CD4-positive, alpha-beta T cell (primary cell): ENCODE measurements at regions of chr19 and their contacts with region 1.

Region 1: GRCh38 chr19:2096480-2097329 is at the start of gene IZUMO4:
- DNase-seq: peak; percentile 99 to 100 (median 100)
- ATAC-seq: peak; percentile 79
- H3K4me3 ChIP-seq: peak within 1 kb of the TSS; percentile 93
- H3K4me3 Mint-ChIP-seq: peak within 1 kb of the TSS; percentile 97
- H3K27ac ChIP-seq: peak within 1 kb of the TSS; percentile 75 to 79
- H3K27ac Mint-ChIP-seq: peak within 1 kb of the TSS; percentile 96
- H3K4me1 ChIP-seq: peaks cover 54% of the 10 kb centered on the region
- H3K4me1 Mint-ChIP-seq: peaks cover 25% of the 10 kb centered on the region
- H3K27me3 ChIP-seq: no peaks in the 10 kb centered on the region
- H3K27me3 Mint-ChIP-seq: no peaks in the 10 kb centered on the region
- CTCF ChIP-seq: peak; percentile 38
- total RNA-seq, gene IZUMO4: 17.4 to 17.9 TPM

Region 2: DNA sequence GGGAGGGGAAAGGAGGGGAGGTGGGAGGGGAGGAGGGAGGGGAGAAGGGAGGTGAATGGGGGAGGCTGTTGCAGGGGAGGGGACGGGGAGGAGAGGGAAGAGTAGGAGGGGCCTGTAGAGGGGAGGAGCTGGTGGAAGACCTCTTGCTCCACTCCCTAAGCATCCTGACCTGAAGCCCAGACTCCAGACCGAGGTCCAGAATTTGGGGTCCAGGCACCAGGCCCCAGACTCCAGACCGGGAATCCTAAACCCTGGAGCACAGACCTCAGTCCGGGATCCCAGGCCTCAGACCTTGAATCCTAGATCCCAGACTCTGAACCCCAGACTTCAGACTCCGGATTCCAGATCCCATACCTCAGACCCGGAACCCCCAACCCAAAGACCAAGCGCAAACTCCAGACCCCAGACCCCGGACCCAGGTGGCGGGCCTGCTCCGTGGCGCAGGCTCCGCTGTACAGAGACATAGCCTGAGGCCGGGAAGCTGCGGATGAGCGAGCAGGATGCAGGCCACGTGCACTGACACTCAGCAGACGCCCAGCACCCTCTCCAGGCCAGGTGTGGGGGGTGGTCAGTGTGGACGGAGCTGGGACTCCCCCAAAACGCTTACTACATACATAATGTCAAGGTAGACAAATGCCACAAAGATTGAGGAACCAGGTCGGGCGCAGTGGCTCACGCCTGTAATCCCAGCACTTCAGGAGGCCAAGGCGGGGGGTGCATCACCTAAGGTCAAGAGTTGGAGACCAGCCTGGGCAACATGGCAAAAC is 80.5 kb before region 1 on chr19:
- CTCF ChIA-PET with region 1: interaction called, 8 read pairs
- POLR2A ChIA-PET with region 1: interaction called, 5 read pairs
- intact Hi-C with region 1: loop called (anchors 1 kb)
- DNase-seq: peak in 12 of 14 experiments; percentile 42 to 86 (median 54)
- ATAC-seq: peak; percentile 63
- H3K4me3 ChIP-seq: peak overlapping the region; percentile 30
- H3K4me3 Mint-ChIP-seq: peak overlapping the region; percentile 76
- H3K27ac ChIP-seq: no peak overlapping the region
- H3K27ac Mint-ChIP-seq: peak overlapping the region; percentile 69
- H3K4me1 ChIP-seq: peaks cover 33% of the 10 kb centered on the region
- H3K4me1 Mint-ChIP-seq: peaks cover 22% of the 10 kb centered on the region
- H3K27me3 ChIP-seq: no peaks in the 10 kb centered on the region
- H3K27me3 Mint-ChIP-seq: no peaks in the 10 kb centered on the region
- CTCF ChIP-seq: no peak

Region 3: GRCh38 chr19:2050991-2051772 is 45.5 kb before region 1 on chr19 and contains the start of gene MKNK2:
- CTCF ChIA-PET with region 1: interaction called, 4 read pairs
- POLR2A ChIA-PET with region 1: interaction called, 18 read pairs
- intact Hi-C with region 1: loop called in 1 of 2 experiments (anchors 1 kb)
- DNase-seq: peak; percentile 88 to 98 (median 95)
- ATAC-seq: peak; percentile 81
- H3K4me3 ChIP-seq: peak within 1 kb of the TSS; percentile 99
- H3K4me3 Mint-ChIP-seq: peak within 1 kb of the TSS; percentile 94
- H3K27ac ChIP-seq: peak within 1 kb of the TSS; percentile 83 to 87
- H3K27ac Mint-ChIP-seq: peak within 1 kb of the TSS; percentile 93
- H3K4me1 ChIP-seq: peaks cover 78% of the 10 kb centered on the region
- H3K4me1 Mint-ChIP-seq: peaks cover 37% of the 10 kb centered on the region
- H3K27me3 ChIP-seq: no peaks in the 10 kb centered on the region
- H3K27me3 Mint-ChIP-seq: no peaks in the 10 kb centered on the region
- CTCF ChIP-seq: peak; percentile 32
- total RNA-seq, gene MKNK2: 325 to 347 TPM

Region 4: GRCh38 chr19:2070436-2070827 is 26.3 kb before region 1 on chr19:
- CTCF ChIA-PET with region 1: interaction called, 12 read pairs
- POLR2A ChIA-PET with region 1: interaction called, 16 read pairs
- intact Hi-C with region 1: loop called in 1 of 2 experiments (anchors 2 kb)
- DNase-seq: no peak
- ATAC-seq: no peak
- H3K4me3 ChIP-seq: no peak overlapping the region
- H3K4me3 Mint-ChIP-seq: no peak overlapping the region
- H3K27ac ChIP-seq: no peak overlapping the region
- H3K27ac Mint-ChIP-seq: peak overlapping the region; percentile 84
- H3K4me1 ChIP-seq: peaks cover 32% of the 10 kb centered on the region
- H3K4me1 Mint-ChIP-seq: peaks cover 16% of the 10 kb centered on the region
- H3K27me3 ChIP-seq: no peaks in the 10 kb centered on the region
- H3K27me3 Mint-ChIP-seq: no peaks in the 10 kb centered on the region
- CTCF ChIP-seq: no peak

Region 5: DNA sequence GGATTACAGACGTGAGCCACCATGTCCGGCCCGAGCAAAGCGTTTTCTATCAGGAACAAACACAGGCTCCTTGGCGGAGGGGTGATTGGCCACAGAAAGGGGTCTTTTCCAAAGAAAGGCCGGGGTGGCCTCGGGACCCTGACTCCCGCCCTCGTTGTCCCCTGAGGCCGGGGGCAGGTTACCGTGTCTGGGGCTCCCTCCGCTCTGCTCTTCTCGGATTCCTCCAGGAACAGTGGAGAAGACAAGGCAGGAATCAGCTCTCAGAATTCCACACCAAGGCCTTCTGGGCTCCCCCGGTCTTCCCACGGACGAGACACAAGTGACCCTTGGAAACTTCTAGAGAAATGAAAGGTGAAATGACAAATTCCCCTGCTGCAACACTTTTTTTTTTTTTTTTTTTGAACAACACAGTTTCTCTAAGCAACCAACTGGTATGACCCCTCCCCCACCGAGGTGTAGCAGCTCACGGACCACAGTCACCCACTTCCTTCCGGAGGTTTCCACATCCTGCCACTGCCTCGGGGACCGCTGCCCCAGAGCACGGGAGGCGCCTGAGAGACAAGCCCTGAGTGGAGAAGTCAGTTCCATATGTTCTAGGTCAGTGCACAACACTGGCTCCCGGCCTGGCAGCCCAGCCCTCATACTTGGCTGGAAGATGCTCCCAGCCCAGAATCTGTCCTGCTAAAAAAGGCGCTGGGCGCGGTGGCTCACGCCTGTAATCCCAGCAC is 11.5 kb before region 1 on chr19:
- CTCF ChIA-PET with region 1: interaction called, 21 read pairs
- POLR2A ChIA-PET with region 1: interaction called, 153 read pairs
- intact Hi-C with region 1: loop called (anchors 1 kb)
- DNase-seq: peak; percentile 83 to 99 (median 92)
- ATAC-seq: peak; percentile 59
- H3K4me3 ChIP-seq: peak overlapping the region; percentile 99
- H3K4me3 Mint-ChIP-seq: peak overlapping the region; percentile 93
- H3K27ac ChIP-seq: peak overlapping the region; percentile 97 to 98
- H3K27ac Mint-ChIP-seq: peak overlapping the region; percentile 97
- H3K4me1 ChIP-seq: peaks cover 85% of the 10 kb centered on the region
- H3K4me1 Mint-ChIP-seq: peaks cover 75% of the 10 kb centered on the region
- H3K27me3 ChIP-seq: no peaks in the 10 kb centered on the region
- H3K27me3 Mint-ChIP-seq: no peaks in the 10 kb centered on the region
- CTCF ChIP-seq: no peak